ENCODE measurements at regions of chr2 and their contacts with region 1.

Region 1: GRCh38 chr2:58107803-58108710 is 61.5 kb downstream of the VRK2 start:
- DNase-seq: no peak
- H3K4me3 Mint-ChIP-seq: no peak overlapping the region
- H3K27ac Mint-ChIP-seq: peak overlapping the region; percentile 46
- H3K4me1 Mint-ChIP-seq: peaks cover 10% of the 10 kb centered on the region
- H3K27me3 Mint-ChIP-seq: no peaks in the 10 kb centered on the region

Region 2: DNA sequence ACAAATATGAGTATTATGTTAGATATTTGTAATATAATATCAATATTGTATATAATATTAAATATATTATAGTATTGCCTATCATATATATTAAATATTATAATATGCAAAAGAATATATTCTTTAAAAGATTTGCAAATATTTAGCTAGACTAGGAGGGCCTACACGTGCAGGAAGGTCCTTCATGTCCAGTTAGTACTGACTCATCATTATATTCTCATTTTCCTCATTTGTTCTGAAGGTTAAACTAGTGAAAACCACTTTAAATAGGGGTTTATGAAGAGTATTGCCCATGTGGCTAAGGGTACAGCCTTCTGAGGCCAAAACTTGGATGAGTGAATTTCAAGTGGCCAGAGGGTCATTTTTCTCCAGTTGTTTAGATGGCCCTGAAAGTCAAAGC is 354.4 kb before region 1 on chr2:
- intact Hi-C with region 1: no loop called
- DNase-seq: no peak
- H3K4me3 Mint-ChIP-seq: no peak overlapping the region
- H3K27ac Mint-ChIP-seq: no peak overlapping the region
- H3K4me1 Mint-ChIP-seq: no peaks in the 10 kb centered on the region
- H3K27me3 Mint-ChIP-seq: no peaks in the 10 kb centered on the region

Region 3: DNA sequence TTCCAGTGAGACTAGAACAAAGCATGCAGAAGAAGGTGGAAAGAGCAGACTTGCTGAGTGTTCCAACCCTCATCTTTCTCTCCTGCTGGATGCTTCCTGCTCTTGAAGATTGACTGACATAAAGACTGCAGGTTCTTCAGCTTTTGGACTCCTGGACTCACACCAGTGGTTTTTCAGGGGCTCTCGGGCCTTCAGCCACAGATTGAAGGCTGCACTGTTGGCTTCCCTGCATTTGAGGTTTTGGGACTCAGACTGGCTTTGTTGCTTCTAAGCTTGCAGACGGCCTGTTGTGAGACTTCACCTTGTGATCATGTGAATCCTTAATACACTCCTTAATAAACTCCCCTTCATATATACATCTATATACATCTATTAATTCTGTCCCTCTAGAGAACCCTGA is 41.1 kb before region 1 on chr2:
- intact Hi-C with region 1: loop called (anchors 5 kb)
- DNase-seq: no peak
- H3K4me3 Mint-ChIP-seq: no peak overlapping the region
- H3K27ac Mint-ChIP-seq: no peak overlapping the region
- H3K4me1 Mint-ChIP-seq: peaks cover 20% of the 10 kb centered on the region
- H3K27me3 Mint-ChIP-seq: no peaks in the 10 kb centered on the region

Region 4: DNA sequence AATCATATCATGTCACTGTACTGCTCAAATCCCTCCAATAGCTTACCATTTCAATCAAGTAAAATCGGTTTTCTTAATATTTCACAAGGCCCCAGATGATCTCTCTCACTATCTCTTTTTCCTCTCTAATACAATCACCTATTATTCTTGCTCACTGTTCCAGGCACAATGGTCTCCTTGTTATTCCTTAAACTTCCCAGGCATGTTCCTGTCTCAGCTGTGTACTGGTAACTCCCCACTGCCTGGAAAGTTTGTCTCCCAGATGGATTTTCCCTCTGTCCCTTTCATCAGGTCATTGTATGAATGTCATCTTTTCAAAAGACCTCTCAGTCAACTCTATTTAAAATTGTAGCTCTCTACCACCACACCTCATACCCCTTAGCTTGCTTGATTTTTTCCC is 163.8 kb after region 1 on chr2:
- intact Hi-C with region 1: no loop called
- DNase-seq: no peak
- H3K4me3 Mint-ChIP-seq: no peak overlapping the region
- H3K27ac Mint-ChIP-seq: no peak overlapping the region
- H3K4me1 Mint-ChIP-seq: no peaks in the 10 kb centered on the region
- H3K27me3 Mint-ChIP-seq: peaks cover 5% of the 10 kb centered on the region